ENCODE measurements at regions of chr15 and their contacts with region 1.

Region 1: DNA sequence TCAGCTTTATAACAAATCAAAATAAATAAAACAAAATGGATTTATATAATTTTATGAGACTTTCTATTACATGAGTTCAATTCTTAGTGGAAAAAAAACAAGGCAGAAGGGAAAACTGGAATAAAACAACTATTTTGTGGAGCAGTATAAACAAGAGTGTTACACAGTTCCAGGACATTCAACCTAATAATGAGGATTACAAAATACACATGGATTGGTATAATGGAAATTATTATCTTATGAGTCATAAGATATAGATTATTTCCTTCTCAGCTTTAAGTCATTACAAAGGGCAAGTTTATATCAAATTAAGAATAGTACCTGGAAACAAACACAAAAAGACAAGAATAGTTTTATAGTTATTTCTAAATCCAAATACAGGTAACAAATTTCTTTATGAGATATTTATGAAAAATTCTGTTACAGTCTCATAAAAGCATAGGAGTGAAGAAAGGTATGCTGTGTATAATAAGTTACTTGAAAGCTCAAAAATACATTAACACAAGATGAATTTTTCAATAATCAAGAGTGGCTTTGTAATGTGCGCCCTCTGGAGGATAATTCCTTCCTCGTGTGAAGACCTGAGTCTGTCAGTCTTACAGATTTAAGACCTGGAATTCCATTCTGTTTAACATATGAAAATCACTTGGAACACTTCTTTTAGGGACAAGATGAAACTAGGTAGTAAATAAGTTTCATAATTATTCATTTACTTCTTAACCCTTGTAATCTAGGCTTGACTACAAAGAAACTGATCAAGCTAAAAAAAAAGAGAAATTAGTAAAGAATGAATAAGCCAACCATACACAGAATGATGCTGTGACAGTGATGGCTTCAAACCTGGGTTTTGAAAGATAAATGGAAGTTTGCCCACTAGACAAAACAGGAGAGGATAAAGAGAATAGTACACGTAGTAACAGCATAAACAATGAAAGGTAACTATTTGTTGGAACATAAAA is 9.5 kb downstream of the COPS2 start:
- DNase-seq: peak; percentile 90
- H3K4me3 ChIP-seq: peak overlapping the region in 1 of 3 experiments; percentile 17
- H3K27ac ChIP-seq: peak overlapping the region; percentile 31
- H3K4me1 ChIP-seq: peaks cover 10% of the 10 kb centered on the region
- H3K27me3 ChIP-seq: no peaks in the 10 kb centered on the region
- CTCF ChIP-seq: peak; percentile 53 to 59
- POLR2A ChIP-seq: no peak

Region 2: DNA sequence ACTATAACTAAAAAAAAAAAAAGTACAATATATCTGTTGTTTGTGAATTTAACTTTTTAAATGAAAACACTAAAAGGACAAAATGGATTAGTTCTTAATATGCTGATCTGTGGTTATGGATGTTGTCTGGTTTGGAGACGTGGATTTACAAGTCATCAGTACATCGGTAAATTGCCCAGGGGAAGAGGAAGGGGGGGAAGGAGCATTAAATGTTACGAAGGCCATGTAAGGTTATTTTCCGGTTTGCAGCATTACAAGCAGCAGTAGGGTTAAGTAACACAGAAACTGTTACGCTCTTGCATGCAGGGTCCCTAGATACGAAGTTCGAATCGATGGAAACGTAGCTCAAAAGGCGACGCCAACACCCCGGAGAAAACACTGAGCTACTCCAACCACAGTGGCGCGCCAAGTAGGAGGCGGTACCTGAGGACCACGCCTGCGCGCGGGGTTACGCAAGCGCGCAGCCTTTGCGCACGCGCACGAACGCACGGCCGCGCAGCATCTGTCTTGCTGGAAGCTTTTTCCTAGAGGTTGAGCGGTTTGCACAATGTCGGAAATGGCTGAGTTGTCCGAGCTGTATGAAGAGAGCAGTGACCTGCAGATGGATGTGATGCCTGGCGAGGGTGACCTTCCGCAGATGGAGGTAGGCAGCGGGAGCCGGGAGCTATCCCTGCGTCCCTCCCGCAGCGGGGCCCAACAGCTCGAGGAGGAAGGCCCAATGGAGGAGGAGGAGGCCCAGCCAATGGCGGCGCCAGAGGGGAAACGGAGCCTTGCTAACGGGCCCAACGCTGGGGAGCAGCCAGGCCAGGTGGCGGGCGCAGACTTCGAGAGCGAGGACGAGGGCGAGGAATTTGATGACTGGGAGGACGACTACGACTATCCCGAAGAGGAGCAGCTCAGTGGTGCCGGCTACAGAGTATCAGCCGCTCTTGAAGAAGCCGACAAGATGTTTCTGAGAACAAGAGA is 268.0 kb before region 1 on chr15 and contains the start of gene EID1:
- CTCF ChIA-PET with region 1: interaction called, 11 read pairs
- POLR2A ChIA-PET with region 1: no interaction called
- dilution Hi-C with region 1: no loop called
- intact Hi-C with region 1: no loop called
- DNase-seq: peak; percentile 97
- H3K4me3 ChIP-seq: peak within 1 kb of the TSS; percentile 25 to 86 (median 67)
- H3K27ac ChIP-seq: peak within 1 kb of the TSS; percentile 29
- H3K4me1 ChIP-seq: peaks cover 13% of the 10 kb centered on the region
- H3K27me3 ChIP-seq: peaks cover under 1 to 7% of the 10 kb centered on the region in 2 experiments
- CTCF ChIP-seq: no peak
- POLR2A ChIP-seq: peak; percentile 86
- total RNA-seq, gene EID1: 146 and 153 TPM in 2 replicates

Region 3: DNA sequence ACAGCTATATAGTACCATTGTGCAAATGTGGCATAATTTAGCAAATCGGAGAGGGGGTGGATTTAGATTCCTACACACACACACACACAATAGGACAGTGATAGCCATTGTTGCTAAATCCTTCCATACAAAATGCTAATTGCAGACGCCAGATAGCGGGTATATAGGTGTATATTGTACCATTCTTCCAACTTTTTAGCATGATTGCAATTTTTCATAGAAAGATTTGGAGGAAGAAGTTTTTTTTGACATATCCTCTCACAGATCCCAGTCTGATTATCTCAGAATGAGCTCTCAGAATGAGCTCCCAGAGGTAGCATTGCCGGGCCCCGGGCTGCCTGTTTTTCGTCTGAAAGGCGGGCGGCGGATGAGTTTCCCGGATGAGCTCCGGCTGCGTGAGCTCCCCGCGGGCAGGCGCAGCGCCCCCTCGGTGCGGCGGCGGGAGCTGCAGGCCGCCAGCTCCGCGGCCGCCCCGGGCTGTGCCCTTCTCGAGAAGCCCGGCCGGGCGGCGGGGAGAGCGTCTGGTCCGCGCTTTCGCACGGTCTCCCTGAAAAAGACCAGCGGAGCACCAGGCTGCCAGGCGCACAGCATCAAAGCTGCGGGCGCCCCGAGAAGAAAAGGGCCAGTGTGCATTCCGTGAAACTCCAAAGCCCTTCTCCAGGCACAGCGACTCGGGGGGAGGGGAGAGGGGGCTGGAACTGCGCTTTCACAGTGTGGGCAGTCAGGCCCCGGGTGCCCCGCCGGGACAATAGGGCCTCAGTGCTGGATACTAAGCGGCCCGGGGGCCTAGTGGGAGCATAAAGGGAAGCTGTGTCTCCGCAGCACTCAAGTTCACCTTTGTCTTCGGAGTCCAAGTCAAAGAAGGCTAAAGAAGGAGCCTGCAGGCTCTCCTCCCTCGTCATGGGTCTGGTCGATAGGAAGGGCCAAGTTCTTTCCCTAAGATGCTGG is 170.2 kb before region 1 on chr15:
- CTCF ChIA-PET with region 1: interaction called, 38 read pairs
- POLR2A ChIA-PET with region 1: no interaction called
- dilution Hi-C with region 1: no loop called
- intact Hi-C with region 1: no loop called
- DNase-seq: peak; percentile 79
- H3K4me3 ChIP-seq: peak overlapping the region; percentile 34 to 61 (median 58)
- H3K27ac ChIP-seq: no peak overlapping the region
- H3K4me1 ChIP-seq: peaks cover 8% of the 10 kb centered on the region
- H3K27me3 ChIP-seq: no peaks in the 10 kb centered on the region
- CTCF ChIP-seq: peak; percentile 81 to 98
- POLR2A ChIP-seq: no peak

Region 4: DNA sequence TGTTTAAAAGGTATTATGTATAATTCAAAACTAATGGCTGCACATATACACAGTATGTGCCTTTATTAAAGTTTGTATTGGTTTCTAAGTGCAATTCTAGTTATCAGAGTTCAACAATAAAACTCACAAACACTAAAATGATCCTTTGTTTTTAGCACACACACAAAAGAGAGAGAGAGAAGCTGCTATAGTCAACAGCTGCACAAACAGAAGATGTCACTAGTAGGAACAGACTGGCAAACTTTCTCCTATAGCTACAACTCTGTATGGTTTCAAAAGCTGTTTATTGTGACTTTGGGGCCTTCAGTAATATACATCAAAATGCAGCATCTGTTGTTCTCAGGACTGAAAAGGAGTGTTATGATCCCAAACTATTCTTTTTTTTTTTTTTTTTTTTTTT is 105.8 kb before region 1 on chr15:
- CTCF ChIA-PET with region 1: interaction called, 36 read pairs
- POLR2A ChIA-PET with region 1: no interaction called
- dilution Hi-C with region 1: no loop called
- intact Hi-C with region 1: no loop called
- DNase-seq: no peak
- H3K4me3 ChIP-seq: no peak overlapping the region
- H3K27ac ChIP-seq: no peak overlapping the region
- H3K4me1 ChIP-seq: peaks cover 12% of the 10 kb centered on the region
- H3K27me3 ChIP-seq: no peaks in the 10 kb centered on the region
- CTCF ChIP-seq: no peak
- POLR2A ChIP-seq: no peak

Region 5: GRCh38 chr15:49060710-49061505 is 85.0 kb before region 1 on chr15:
- CTCF ChIA-PET with region 1: interaction called, 22 read pairs
- POLR2A ChIA-PET with region 1: no interaction called
- dilution Hi-C with region 1: no loop called
- intact Hi-C with region 1: no loop called
- DNase-seq: peak; percentile 77
- H3K4me3 ChIP-seq: no peak overlapping the region
- H3K27ac ChIP-seq: peak overlapping the region; percentile 55
- H3K4me1 ChIP-seq: peaks cover 20% of the 10 kb centered on the region
- H3K27me3 ChIP-seq: no peaks in the 10 kb centered on the region
- CTCF ChIP-seq: no peak
- POLR2A ChIP-seq: no peak

Region 6: GRCh38 chr15:49135893-49136292 is 10.0 kb before region 1 on chr15:
- CTCF ChIA-PET with region 1: interaction called, 39 read pairs
- POLR2A ChIA-PET with region 1: no interaction called
- dilution Hi-C with region 1: no loop called
- intact Hi-C with region 1: no loop called
- DNase-seq: peak; percentile 81
- H3K4me3 ChIP-seq: peak overlapping the region in 1 of 3 experiments; percentile 17
- H3K27ac ChIP-seq: peak overlapping the region; percentile 97
- H3K4me1 ChIP-seq: peaks cover 50% of the 10 kb centered on the region
- H3K27me3 ChIP-seq: no peaks in the 10 kb centered on the region
- CTCF ChIP-seq: no peak
- POLR2A ChIP-seq: no peak

Region 7: DNA sequence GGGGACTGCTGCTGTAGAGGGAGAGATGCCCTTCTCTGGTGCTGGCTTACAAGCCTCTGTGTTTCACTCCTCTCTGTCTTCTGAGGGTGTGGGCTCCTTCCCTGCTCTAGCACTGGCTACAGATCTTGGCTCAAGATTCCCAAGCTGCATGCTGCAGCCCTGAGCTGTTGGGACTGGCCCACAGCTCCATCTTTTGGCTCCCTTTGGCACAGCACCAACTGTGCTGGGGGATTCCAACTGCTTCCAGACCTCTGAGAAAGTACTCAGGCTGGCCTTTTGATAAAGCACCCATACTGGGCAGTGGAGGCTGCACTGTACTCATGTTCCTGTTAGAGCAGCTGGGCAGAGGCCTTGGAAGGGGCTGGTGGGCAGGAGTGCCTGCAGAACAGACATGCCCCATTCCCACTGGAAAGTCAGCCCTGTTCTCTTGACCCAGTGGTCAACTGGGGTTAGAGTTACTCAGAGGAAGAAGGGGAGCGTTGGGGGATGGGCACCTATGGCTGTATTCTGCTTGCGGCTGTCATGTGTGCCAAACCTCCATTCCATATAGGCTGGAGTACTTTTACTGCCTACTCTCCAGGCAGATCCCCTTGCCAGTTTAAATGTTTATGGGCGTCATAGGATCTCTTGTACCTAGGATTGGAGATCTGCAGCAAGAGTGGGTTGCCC is 79.8 kb after region 1 on chr15:
- CTCF ChIA-PET with region 1: interaction called, 10 read pairs
- POLR2A ChIA-PET with region 1: no interaction called
- dilution Hi-C with region 1: no loop called
- intact Hi-C with region 1: no loop called
- DNase-seq: peak; percentile 28
- H3K4me3 ChIP-seq: no peak overlapping the region
- H3K27ac ChIP-seq: no peak overlapping the region
- H3K4me1 ChIP-seq: no peaks in the 10 kb centered on the region
- H3K27me3 ChIP-seq: no peaks in the 10 kb centered on the region
- CTCF ChIP-seq: peak; percentile 19 to 46
- POLR2A ChIP-seq: no peak

Measured in endothelial cell of umbilical vein (primary cell).